RWPE1 (cell line): ENCODE measurements at regions of chr20 and their contacts with region 1.

Region 1: GRCh38 chr20:49216991-49217578 is 2.1 kb upstream of the DDX27 start:
- DNase-seq: peak; percentile 89
- H3K27ac ChIP-seq: peak overlapping the region; percentile 23; the same call in 1 of the 2 replicates
- CTCF ChIP-seq: peak; percentile 98

Region 2: DNA sequence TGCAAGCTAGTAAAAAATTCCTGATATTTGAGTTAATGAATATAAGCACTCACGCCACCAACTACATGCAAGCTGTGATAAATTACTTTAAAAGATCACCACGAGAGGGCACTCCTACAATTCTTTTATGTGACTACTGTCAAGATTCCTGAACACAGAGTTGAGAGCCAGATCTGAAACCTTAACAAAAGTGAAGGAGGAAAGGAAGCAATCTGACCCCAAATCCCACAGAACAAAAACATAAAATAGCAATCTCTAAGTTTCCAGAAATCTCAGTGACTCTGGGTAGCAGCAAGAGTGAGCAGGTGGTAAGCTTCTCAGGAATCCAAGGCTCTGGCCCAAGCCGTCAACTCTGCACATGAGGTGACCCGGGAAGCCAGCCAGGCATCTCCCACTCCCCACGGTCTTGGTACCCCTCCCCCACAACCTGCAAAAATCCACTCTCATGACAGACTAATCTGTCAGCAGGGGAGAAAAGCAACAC is 84.0 kb before region 1 on chr20:
- CTCF ChIA-PET with region 1: interaction called, 41 read pairs
- POLR2A ChIA-PET with region 1: interaction called, 3 read pairs
- DNase-seq: peak; percentile 71
- H3K27ac ChIP-seq: peak overlapping the region; percentile 2; the same call in 1 of the 2 replicates
- CTCF ChIP-seq: peak; percentile 80

Region 3: DNA sequence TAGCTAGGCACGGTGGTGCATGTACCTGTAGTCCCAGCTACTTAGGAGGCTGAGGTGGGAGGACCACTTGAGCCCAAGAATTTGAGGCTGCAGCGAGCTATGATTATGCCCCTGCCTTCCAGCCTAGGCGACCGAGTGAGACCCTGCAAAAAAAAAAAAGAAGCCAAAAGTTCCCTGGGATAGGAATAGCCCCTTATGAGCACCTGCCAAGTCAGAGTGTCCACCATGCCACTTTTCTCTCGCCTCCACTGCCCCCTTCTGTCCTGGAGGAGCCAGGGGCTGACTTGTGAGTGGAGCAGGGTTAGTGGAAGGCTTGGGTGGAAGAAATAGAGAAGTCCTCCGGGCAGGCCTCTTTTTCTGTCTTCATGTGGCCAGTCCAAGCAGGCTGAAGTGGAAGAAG is 10.0 kb before region 1 on chr20:
- CTCF ChIA-PET with region 1: interaction called, 19 read pairs
- POLR2A ChIA-PET with region 1: no interaction called
- DNase-seq: no peak
- H3K27ac ChIP-seq: no peak overlapping the region
- CTCF ChIP-seq: 0 out of 2 replicates have a peak, but pooled peaks have one; percentile 13

Region 4: GRCh38 chr20:49272654-49273053 is 55.6 kb after region 1 on chr20:
- CTCF ChIA-PET with region 1: no interaction called
- POLR2A ChIA-PET with region 1: no interaction called
- DNase-seq: no peak
- H3K27ac ChIP-seq: no peak overlapping the region
- CTCF ChIP-seq: no peak

Region 5: GRCh38 chr20:49435659-49436058 is 218.6 kb after region 1 on chr20:
- CTCF ChIA-PET with region 1: no interaction called
- POLR2A ChIA-PET with region 1: no interaction called
- DNase-seq: no peak
- H3K27ac ChIP-seq: no peak overlapping the region
- CTCF ChIP-seq: no peak